Panc1 (cell line): ENCODE measurements at regions of chr15 and their contacts with region 1.

Region 1: DNA sequence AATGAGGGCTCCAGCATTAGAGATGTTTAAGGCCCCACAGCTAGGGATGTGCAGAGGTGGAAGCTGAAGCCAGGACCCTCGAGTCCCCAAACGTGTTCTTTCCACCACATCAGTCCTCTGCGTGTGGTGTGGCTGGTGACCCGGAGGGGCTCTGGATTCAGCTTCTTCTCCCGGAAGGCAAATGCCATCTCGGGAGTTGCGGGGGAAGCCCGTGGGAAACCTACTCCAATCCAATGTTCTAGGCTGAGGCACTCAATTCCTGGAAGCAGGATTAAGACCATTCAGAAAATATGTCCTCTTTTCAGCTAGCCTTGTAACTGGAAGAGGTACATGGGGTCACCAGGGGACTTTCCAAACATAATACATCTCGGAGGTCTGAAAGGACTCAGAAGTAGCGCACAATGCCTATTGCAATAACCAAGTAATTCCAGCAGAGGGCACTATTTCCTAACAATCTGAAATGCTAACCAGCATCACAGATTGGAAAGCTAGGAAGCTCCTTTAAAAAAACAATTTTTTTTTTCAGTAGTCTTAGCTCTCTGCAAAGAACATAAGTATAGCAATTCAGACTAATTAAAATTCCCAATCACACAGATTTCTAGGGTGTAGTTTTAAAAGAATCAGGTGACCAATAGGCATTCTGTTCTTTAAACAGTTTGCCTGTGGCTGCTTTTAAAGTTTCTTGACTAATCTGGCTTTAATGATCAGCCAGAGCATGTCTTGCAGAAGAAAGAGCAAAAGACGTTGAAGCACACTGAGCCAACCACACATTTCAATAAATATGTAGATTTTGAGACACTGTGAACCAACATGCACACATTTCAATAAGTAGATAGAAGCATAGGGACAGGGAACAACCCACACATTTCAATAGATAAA is 36.1 kb downstream of the BNC1 start:
- DNase-seq: peak; percentile 42
- ATAC-seq: peak; percentile 87
- H3K4me3 ChIP-seq: no peak overlapping the region
- H3K27ac ChIP-seq: no peak overlapping the region
- H3K4me1 ChIP-seq: no peaks in the 10 kb centered on the region
- H3K27me3 ChIP-seq: peaks cover 4% of the 10 kb centered on the region; the same call in 1 of the 2 replicates
- CTCF ChIP-seq: peak; percentile 85

Region 2: GRCh38 chr15:83270176-83270575 is 21.8 kb after region 1 on chr15:
- CTCF ChIA-PET with region 1: no interaction called
- POLR2A ChIA-PET with region 1: no interaction called
- in situ Hi-C with region 1: no loop called
- intact Hi-C with region 1: no loop called
- DNase-seq: no peak
- ATAC-seq: no peak
- H3K4me3 ChIP-seq: no peak overlapping the region
- H3K27ac ChIP-seq: no peak overlapping the region
- H3K4me1 ChIP-seq: no peaks in the 10 kb centered on the region
- H3K27me3 ChIP-seq: no peaks in the 10 kb centered on the region
- CTCF ChIP-seq: no peak

Region 3: DNA sequence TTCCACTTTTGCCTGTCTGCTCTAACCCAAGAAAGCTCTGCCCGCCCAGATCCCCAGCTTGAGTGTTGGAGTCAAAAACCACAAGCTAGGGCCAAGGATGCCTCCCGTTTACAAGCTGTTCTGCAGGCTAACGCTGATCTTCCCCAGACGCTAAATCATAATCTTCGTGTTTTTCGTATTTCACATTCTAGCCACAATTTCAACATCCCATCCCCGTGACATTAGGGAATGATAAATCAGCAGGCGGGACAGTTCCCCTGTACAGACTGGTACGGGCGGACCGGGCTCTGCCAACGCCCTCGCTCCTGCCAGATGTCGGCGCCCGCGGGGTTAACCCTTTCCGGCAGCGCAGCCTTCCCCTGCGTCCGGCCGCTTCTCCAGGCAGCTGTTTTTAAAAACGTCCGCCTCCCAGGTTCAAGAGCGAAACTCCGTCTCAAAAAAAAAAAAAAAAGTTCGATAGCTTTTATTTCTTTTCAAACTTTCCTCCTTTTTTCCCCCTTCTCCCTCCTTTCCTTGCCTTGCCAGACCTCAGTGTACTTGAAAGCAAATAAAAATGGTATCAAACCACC is 117.1 kb after region 1 on chr15:
- CTCF ChIA-PET with region 1: no interaction called
- POLR2A ChIA-PET with region 1: no interaction called
- in situ Hi-C with region 1: no loop called
- intact Hi-C with region 1: loop called (anchors 10 kb)
- DNase-seq: no peak
- ATAC-seq: peak; percentile 68; the same call in 1 of the 2 replicates
- H3K4me3 ChIP-seq: peak overlapping the region; percentile 4 to 9; a peak in 2 of 4 replicates
- H3K27ac ChIP-seq: no peak overlapping the region
- H3K4me1 ChIP-seq: no peaks in the 10 kb centered on the region; the same call in 1 of the 2 replicates
- H3K27me3 ChIP-seq: peaks cover 25% of the 10 kb centered on the region
- CTCF ChIP-seq: no peak

Region 4: DNA sequence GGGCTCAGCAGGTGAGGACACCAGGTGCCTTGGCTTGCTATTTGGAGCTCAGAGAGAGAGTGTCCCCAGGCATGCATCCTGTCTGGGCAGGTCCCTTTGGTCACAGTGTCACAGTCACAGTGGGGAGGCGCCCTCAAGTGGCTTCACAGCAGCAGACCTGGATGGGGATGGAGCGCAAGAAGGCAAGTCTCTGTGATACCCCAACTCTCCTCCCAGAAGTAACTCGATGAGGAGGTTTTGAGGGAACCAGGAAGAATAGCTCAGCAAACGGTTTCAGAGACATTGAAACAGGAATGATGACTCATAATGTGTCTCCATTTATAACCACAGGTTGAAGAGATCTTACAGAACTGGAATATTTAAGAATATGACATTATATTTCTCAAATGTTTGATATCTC is 132.3 kb after region 1 on chr15:
- CTCF ChIA-PET with region 1: interaction called, 3 read pairs
- POLR2A ChIA-PET with region 1: no interaction called
- in situ Hi-C with region 1: no loop called
- intact Hi-C with region 1: loop called (anchors 2 kb)
- DNase-seq: peak; percentile 8
- ATAC-seq: peak; percentile 91
- H3K4me3 ChIP-seq: no peak overlapping the region
- H3K27ac ChIP-seq: no peak overlapping the region
- H3K4me1 ChIP-seq: no peaks in the 10 kb centered on the region
- H3K27me3 ChIP-seq: no peaks in the 10 kb centered on the region; the same call in 1 of the 2 replicates
- CTCF ChIP-seq: peak; percentile 81

Region 5: GRCh38 chr15:83436458-83437158 is 188.2 kb after region 1 on chr15:
- CTCF ChIA-PET with region 1: interaction called, 8 read pairs
- POLR2A ChIA-PET with region 1: no interaction called
- in situ Hi-C with region 1: no loop called
- intact Hi-C with region 1: loop called (anchors 1 kb)
- DNase-seq: no peak
- ATAC-seq: peak; percentile 75; the same call in 1 of the 2 replicates
- H3K4me3 ChIP-seq: no peak overlapping the region
- H3K27ac ChIP-seq: no peak overlapping the region
- H3K4me1 ChIP-seq: no peaks in the 10 kb centered on the region
- H3K27me3 ChIP-seq: peaks cover 5% of the 10 kb centered on the region
- CTCF ChIP-seq: peak; percentile 70

Region 6: DNA sequence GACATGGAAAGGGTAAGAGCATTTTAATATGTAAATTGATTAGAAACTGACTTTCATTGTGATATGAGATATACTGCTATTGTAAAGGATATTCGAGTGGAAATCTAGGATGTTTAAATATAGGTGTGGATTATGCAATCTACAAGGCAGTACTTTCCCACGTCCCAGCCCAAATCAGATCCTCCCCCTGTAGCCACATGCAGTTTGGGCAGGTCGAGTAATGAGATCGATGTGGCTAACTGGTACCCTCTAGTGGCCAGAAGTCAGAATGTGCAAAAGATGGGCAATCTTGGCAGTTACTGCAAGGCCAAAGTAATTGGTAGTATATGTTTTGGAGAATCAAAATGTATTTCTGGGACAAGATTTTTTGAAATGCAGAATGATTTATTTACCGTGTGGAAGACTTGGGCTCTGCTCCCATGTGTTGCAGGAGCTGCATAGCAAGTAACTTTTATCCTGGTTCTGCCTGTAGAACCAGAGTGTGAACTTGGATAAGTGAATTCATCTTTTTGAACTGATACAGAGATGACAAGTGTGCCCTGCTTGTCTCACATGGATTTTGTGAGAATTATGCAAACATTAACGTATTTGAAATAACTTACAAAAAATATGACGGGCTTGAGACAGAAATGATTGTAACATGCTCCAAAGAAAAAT is 311.0 kb after region 1 on chr15:
- CTCF ChIA-PET with region 1: interaction called, 3 read pairs
- POLR2A ChIA-PET with region 1: no interaction called
- in situ Hi-C with region 1: no loop called
- intact Hi-C with region 1: loop called (anchors 1 kb)
- DNase-seq: peak; percentile 28
- ATAC-seq: peak; percentile 95
- H3K4me3 ChIP-seq: no peak overlapping the region
- H3K27ac ChIP-seq: no peak overlapping the region
- H3K4me1 ChIP-seq: no peaks in the 10 kb centered on the region
- H3K27me3 ChIP-seq: no peaks in the 10 kb centered on the region
- CTCF ChIP-seq: peak; percentile 89